Activated CD4-positive, alpha-beta T cell treated with anti-CD3 and anti-CD28 coated beads, Interleukin-2, amount 10 ng/mL, durations not matched to agents 7 days and 5 days (primary cell): ENCODE measurements at regions of chr17 and their contacts with region 1.

Region 1: GRCh38 chr17:58238139-58238634 is at the start of gene LPO:
- DNase-seq: no peak
- H3K4me3 Mint-ChIP-seq: no peak within 1 kb of the TSS
- H3K27ac Mint-ChIP-seq: no peak within 1 kb of the TSS
- H3K4me1 Mint-ChIP-seq: no peaks in the 10 kb centered on the region
- H3K27me3 Mint-ChIP-seq: peaks cover 66% of the 10 kb centered on the region
- total RNA-seq, gene LPO: not detected

Region 2: GRCh38 chr17:58249270-58250133 is 11.3 kb after region 1 on chr17:
- CTCF ChIA-PET with region 1: interaction called, 12 read pairs
- POLR2A ChIA-PET with region 1: no interaction called
- DNase-seq: peak; percentile 74
- H3K4me3 Mint-ChIP-seq: peak overlapping the region; percentile 54
- H3K27ac Mint-ChIP-seq: no peak overlapping the region
- H3K4me1 Mint-ChIP-seq: peaks cover 22% of the 10 kb centered on the region
- H3K27me3 Mint-ChIP-seq: peaks cover 37% of the 10 kb centered on the region